Adrenal gland (tissue), 19 donors: ENCODE measurements at regions of chr14 and their contacts with region 1.

Region 1: GRCh38 chr14:67514650-67515385 is 18.3 kb upstream of the PLEKHH1 start:
- DNase-seq: peak; percentile 34 to 66 (median 58)
- H3K4me3 ChIP-seq: peak overlapping the region; percentile 76 to 97 (median 92)
- H3K27ac ChIP-seq: peak overlapping the region in 4 of 5 donors; percentile 72 to 91 (median 90)
- H3K4me1 ChIP-seq: peaks cover 27 to 51% of the 10 kb centered on the region in 2 donors
- H3K27me3 ChIP-seq: no peaks in the 10 kb centered on the region
- CTCF ChIP-seq: no peak
- POLR2A ChIP-seq: peak in 1 of 2 donors; percentile 34

Region 2: DNA sequence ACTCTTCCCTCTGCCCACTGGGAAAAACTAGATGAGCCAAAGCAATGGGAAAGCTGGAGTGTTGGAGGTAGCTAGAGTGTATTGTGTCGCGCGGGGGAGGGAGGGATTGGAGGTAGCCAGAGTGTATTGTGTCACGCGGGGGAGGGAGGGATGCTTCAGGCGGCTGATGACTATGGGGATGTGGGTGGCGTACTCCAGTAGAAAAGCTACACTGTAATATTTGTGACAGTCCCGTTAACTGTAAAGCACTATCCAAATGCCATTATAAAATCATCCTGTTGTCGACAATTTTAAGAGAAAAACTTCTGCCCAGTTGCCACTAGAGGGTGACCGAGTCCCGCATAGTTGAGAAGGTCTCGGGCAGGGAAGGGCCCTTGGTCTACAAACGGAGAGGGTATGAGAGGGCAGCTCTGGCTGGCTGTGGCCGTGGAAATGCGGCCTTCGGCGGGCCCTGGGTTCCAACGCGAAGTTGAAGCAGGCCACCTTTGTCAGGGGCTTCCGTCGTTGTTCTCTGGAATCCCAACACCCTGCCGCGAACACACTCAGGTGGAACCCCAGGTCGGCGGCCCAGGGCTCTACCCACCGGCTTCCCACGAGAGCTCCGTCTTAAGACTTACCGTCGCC is 87.7 kb before region 1 on chr14:
- intact Hi-C with region 1: loop called in 1 of 2 experiments (anchors 5 kb)
- DNase-seq: peak; percentile 80 to 91 (median 87)
- H3K4me3 ChIP-seq: no peak overlapping the region
- H3K27ac ChIP-seq: no peak overlapping the region
- H3K4me1 ChIP-seq: peaks cover 0 to 4% of the 10 kb centered on the region in 2 donors
- H3K27me3 ChIP-seq: no peaks in the 10 kb centered on the region
- CTCF ChIP-seq: peak; percentile 85 to 91 (median 88)
- POLR2A ChIP-seq: no peak